Heart right ventricle (tissue), 16 donors: ENCODE measurements at regions of chr3 and their contacts with region 1.

Region 1: DNA sequence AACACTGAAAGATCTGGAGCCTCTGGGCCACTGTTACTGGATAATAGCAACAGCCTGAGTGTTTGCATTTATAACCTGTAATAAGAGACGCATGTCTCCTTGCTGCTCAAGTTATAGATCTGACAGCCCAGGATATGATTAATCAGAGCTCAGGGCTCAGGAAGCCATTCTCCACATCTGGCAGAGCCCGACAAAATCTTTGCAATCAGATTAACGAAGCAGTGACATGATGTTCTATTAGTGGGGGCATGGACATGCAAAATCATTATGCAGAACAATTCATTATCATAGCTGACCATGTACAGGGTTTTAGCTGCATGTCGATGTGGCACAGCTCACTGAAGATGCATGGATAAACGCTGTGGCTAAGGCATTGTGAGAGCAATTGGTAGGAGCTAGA is 730.3 kb downstream of the ZNF385D start:
- DNase-seq: no peak
- ATAC-seq: no peak
- H3K4me3 ChIP-seq: no peak overlapping the region
- H3K27ac ChIP-seq: no peak overlapping the region
- H3K4me1 ChIP-seq: no peaks in the 10 kb centered on the region
- H3K27me3 ChIP-seq: no peaks in the 10 kb centered on the region
- CTCF ChIP-seq: no peak

Region 2: DNA sequence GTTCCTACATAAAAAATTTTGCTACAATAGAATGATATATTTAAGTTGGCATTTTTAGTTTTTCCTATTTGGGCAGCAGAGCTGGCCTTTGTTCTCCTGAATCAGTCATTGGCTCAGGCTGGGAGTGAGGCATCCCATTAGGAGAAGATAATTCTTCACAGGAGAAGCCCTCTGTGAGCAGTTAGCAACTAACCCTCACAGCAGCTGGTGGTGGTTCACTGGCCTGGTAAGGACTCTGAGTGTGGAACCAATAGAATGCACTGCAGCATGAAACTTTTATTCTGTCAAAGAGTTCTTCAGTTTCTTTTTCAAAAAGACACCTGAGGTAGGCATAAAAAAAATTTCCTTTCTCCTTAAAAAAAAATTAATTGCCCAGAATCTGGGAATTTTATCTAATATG is 167.8 kb after region 1 on chr3:
- intact Hi-C with region 1: loop called in 1 of 10 experiments (anchors 5 kb)
- DNase-seq: no peak
- ATAC-seq: no peak
- H3K4me3 ChIP-seq: no peak overlapping the region
- H3K27ac ChIP-seq: no peak overlapping the region
- H3K4me1 ChIP-seq: no peaks in the 10 kb centered on the region
- H3K27me3 ChIP-seq: no peaks in the 10 kb centered on the region
- CTCF ChIP-seq: no peak

Region 3: GRCh38 chr3:21356402-21356801 is 335.7 kb after region 1 on chr3:
- intact Hi-C with region 1: no loop called
- DNase-seq: no peak
- ATAC-seq: no peak
- H3K4me3 ChIP-seq: no peak overlapping the region
- H3K27ac ChIP-seq: no peak overlapping the region
- H3K4me1 ChIP-seq: no peaks in the 10 kb centered on the region
- H3K27me3 ChIP-seq: no peaks in the 10 kb centered on the region
- CTCF ChIP-seq: no peak